ENCODE measurements at regions of chr3 and their contacts with region 1.

Region 1: DNA sequence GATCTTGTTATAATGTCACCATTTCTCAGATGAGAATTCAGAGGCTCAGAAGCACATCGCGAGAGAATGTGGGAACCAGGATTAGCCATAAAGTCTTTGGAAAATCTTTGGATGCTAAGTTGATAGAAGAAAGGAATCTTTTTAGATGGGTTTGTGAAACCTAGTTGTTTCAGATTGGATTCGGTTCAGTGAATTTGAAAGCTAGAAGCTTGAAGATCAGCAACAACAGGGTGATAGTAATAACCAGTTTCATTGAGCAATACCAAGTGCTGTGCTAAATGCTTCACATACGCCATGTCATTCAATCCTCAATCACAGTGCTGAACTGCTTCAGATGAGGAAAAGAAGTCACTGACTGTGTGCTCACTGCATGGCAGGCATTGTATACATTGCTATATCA is 47.4 kb upstream of the MITF start:
- DNase-seq: no peak
- H3K4me3 ChIP-seq: no peak overlapping the region
- H3K4me3 Mint-ChIP-seq: no peak overlapping the region
- H3K27ac Mint-ChIP-seq: no peak overlapping the region
- H3K4me1 ChIP-seq: no peaks in the 10 kb centered on the region
- H3K4me1 Mint-ChIP-seq: no peaks in the 10 kb centered on the region
- H3K27me3 ChIP-seq: no peaks in the 10 kb centered on the region
- H3K27me3 Mint-ChIP-seq: peaks cover 3% of the 10 kb centered on the region
- CTCF ChIP-seq: no peak

Region 2: DNA sequence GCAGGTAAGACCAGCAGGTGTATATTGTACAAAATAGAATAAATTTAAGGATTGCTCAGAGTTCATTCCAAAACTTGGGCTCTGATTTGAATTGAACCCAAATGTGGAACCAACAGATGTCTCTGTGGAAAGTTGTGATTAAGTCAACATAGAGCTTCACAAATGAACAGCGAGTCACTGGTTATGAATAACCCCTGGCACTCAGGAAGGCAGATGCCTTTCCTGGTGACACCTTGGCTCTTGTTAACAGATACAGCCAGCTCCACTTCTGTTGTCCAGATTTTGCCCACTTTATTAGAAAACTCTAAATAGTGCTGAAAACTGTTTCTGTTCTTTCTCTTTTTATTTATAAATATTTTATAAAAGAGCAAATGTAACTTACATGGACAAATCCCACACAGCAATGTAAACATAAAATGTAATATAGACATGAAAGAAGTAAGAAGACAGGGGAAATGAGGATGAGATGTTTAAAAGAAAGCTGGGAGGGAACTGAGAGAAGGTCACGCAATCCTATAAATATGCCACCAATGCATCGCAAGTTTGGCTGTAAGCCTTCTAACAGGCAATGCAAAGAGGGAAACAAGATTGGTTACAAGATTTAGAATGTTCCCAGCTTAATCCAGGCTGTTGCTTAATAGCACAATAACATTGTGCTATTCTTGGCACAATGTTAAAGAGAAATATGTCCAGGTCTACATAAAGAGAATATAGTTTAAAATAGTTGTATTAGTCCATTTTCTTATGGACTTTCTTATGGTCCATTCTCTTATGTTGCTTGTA is 1255.0 kb before region 1 on chr3:
- CTCF ChIA-PET with region 1: no interaction called
- POLR2A ChIA-PET with region 1: no interaction called
- intact Hi-C with region 1: no loop called
- DNase-seq: no peak
- H3K4me3 ChIP-seq: no peak overlapping the region
- H3K4me3 Mint-ChIP-seq: no peak overlapping the region
- H3K27ac Mint-ChIP-seq: no peak overlapping the region
- H3K4me1 ChIP-seq: no peaks in the 10 kb centered on the region
- H3K4me1 Mint-ChIP-seq: no peaks in the 10 kb centered on the region
- H3K27me3 ChIP-seq: no peaks in the 10 kb centered on the region; the same call in 1 of the 2 replicates
- H3K27me3 Mint-ChIP-seq: peaks cover 6% of the 10 kb centered on the region
- CTCF ChIP-seq: no peak

Region 3: DNA sequence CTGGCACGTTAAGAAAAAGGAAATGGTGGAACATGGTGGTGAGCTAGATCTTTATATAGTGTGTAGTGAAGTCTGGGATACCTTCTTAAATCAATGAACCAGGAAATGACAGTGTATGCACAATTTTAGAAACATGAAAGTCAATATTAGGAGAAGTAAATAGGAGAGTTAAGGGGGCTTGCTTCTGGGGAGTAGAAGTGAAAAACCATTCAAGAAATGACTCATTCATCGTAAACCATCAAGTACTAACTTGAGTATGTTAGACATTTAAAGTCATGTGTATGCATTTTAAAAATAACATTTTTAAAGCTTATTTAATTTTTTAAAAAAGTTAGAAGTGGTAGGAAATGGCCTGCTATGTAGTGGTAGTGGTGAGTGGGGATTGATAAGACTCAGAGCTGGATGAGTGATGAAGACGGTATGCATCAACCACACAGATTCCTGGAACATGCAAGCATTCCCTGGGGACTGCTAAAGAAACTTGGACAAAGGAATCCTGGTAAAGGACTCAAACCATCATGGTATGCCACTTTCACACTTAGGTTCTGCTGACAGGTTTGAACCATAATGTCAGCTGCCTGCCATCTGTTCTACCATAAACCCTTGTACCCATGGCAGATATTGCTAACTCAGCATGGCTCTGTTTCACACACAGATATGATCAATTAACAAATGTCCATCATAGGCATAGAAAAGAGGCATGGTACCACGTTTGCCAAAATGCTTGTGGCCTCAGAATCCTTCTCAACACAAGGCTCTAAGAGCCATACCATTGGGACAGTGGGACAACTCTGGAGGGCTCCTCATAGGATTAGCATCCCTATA is 18.5 kb after region 1 on chr3:
- CTCF ChIA-PET with region 1: no interaction called
- POLR2A ChIA-PET with region 1: no interaction called
- intact Hi-C with region 1: no loop called
- DNase-seq: no peak
- H3K4me3 ChIP-seq: no peak overlapping the region
- H3K4me3 Mint-ChIP-seq: no peak overlapping the region
- H3K27ac Mint-ChIP-seq: no peak overlapping the region
- H3K4me1 ChIP-seq: no peaks in the 10 kb centered on the region; the same call in 1 of the 2 replicates
- H3K4me1 Mint-ChIP-seq: no peaks in the 10 kb centered on the region
- H3K27me3 ChIP-seq: no peaks in the 10 kb centered on the region
- H3K27me3 Mint-ChIP-seq: peaks cover 2% of the 10 kb centered on the region
- CTCF ChIP-seq: no peak

Region 4: GRCh38 chr3:69791919-69792399 is 100.1 kb after region 1 on chr3:
- CTCF ChIA-PET with region 1: interaction called, 12 read pairs
- POLR2A ChIA-PET with region 1: no interaction called
- intact Hi-C with region 1: loop called (anchors 1 kb)
- DNase-seq: peak in 1 of 2 experiments; percentile 5
- H3K4me3 ChIP-seq: no peak overlapping the region
- H3K4me3 Mint-ChIP-seq: no peak overlapping the region
- H3K27ac Mint-ChIP-seq: no peak overlapping the region
- H3K4me1 ChIP-seq: peaks cover 6% of the 10 kb centered on the region; the same call in 1 of the 2 replicates
- H3K4me1 Mint-ChIP-seq: peaks cover 6% of the 10 kb centered on the region
- H3K27me3 ChIP-seq: no peaks in the 10 kb centered on the region
- H3K27me3 Mint-ChIP-seq: no peaks in the 10 kb centered on the region
- CTCF ChIP-seq: peak; percentile 24 to 35

Region 5: GRCh38 chr3:69855436-69856162 is 163.7 kb after region 1 on chr3:
- CTCF ChIA-PET with region 1: interaction called, 21 read pairs
- POLR2A ChIA-PET with region 1: no interaction called
- intact Hi-C with region 1: loop called (anchors 1 kb)
- DNase-seq: no peak
- H3K4me3 ChIP-seq: no peak overlapping the region
- H3K4me3 Mint-ChIP-seq: no peak overlapping the region
- H3K27ac Mint-ChIP-seq: no peak overlapping the region
- H3K4me1 ChIP-seq: no peaks in the 10 kb centered on the region
- H3K4me1 Mint-ChIP-seq: peaks cover 6% of the 10 kb centered on the region
- H3K27me3 ChIP-seq: no peaks in the 10 kb centered on the region
- H3K27me3 Mint-ChIP-seq: peaks cover 3% of the 10 kb centered on the region
- CTCF ChIP-seq: peak; percentile 41 to 58

Region 6: DNA sequence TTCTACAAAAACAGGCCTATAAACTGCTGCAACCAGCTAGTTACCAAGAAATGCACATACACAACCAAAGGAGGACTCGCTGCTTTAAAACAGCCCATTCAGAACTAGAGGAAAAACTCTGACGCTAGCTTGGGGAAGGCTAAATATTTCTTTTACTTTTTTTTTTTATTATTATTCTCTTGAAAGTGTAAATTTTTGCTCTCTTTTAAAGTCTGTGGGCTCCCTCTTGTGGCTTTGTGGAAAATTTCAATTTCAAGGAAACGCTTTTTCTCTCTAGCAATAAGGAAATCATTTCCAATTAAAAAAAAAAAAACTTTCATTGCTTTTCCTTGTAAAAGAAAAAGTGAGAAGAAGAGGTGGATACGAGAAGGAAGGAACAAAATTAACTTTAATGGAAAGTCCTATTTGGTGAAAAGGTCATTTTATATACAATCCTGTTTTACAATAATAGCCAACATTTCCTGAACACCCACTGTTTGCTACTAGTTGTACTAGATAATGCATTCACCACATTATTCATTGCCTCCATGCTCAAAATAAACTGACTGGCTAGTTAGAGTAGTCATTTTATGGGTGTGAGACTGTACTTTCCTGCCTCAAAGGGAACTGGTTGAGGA is 256.5 kb after region 1 on chr3:
- CTCF ChIA-PET with region 1: no interaction called
- POLR2A ChIA-PET with region 1: no interaction called
- intact Hi-C with region 1: loop called (anchors 1 kb)
- DNase-seq: peak in 1 of 2 experiments; percentile 15
- H3K4me3 ChIP-seq: no peak overlapping the region
- H3K4me3 Mint-ChIP-seq: no peak overlapping the region
- H3K27ac Mint-ChIP-seq: no peak overlapping the region
- H3K4me1 ChIP-seq: no peaks in the 10 kb centered on the region
- H3K4me1 Mint-ChIP-seq: no peaks in the 10 kb centered on the region
- H3K27me3 ChIP-seq: no peaks in the 10 kb centered on the region
- H3K27me3 Mint-ChIP-seq: no peaks in the 10 kb centered on the region
- CTCF ChIP-seq: peak; percentile 51 to 55

Region 7: DNA sequence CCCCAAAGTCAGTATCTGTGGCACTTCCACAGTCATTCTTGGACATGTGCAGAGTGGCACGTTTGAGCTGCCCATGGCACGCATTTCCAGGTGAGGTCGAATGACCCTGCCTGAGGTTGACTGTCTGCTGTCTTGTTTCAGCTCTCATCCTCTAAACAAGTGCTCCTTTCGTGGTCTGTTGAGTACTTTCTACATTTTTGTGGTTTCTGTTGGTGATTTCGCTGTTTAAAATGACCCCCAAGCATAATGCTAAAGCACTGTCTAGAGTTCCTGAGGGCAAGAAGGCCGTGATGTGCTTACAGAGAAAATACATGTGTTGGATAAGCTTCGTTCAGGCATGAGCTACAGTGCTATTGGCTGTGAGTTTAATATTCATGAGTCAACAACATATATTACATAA is 267.7 kb after region 1 on chr3:
- CTCF ChIA-PET with region 1: no interaction called
- POLR2A ChIA-PET with region 1: no interaction called
- intact Hi-C with region 1: no loop called
- DNase-seq: no peak
- H3K4me3 ChIP-seq: no peak overlapping the region
- H3K4me3 Mint-ChIP-seq: no peak overlapping the region
- H3K27ac Mint-ChIP-seq: no peak overlapping the region
- H3K4me1 ChIP-seq: no peaks in the 10 kb centered on the region
- H3K4me1 Mint-ChIP-seq: no peaks in the 10 kb centered on the region
- H3K27me3 ChIP-seq: no peaks in the 10 kb centered on the region
- H3K27me3 Mint-ChIP-seq: no peaks in the 10 kb centered on the region
- CTCF ChIP-seq: no peak